AG04449 (cell line): ENCODE measurements at regions of chr16 and their contacts with region 1.

Region 1: GRCh38 chr16:30445408-30446202 is at the start of gene SEPHS2:
- DNase-seq: peak; percentile 87
- H3K4me3 ChIP-seq: peak within 1 kb of the TSS; percentile 85
- CTCF ChIP-seq: peak; percentile 71

Region 2: DNA sequence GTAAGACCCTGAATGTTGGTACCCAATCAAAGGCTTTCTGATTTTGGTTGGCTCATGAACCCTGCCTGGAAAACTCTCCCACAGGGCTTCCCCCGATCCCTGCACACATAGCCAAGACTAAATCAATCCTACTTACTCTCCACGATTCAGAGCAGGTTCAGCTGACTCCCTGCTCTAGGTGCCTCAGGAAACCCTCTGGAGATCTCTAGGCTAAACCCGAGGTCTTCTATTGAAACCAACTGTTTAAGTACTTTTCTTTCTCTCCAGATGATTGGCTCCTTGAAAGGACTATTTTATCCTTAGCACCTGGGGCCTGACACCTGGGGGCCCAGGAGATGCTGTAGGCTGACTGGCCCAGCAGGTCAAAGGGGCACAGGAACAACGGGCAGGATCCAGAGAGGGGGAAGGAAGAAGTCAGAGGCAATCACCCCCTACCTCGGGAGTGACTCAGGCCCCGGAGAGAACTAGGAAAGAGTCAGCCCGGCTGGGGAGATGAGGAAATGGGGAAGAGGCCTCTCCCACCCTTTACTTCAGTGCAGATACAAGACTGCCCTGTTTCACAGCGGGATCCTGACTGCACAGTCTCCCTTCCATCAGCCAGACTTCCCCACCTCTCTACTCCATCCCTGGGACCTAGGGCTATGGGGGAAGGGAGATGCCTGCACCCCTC is 77.3 kb before region 1 on chr16:
- CTCF ChIA-PET with region 1: no interaction called
- POLR2A ChIA-PET with region 1: no interaction called
- DNase-seq: no peak
- H3K4me3 ChIP-seq: peak overlapping the region; percentile 85
- CTCF ChIP-seq: no peak

Region 3: GRCh38 chr16:30429678-30430427 is 15.8 kb before region 1 on chr16 and contains the start of gene DCTPP1:
- CTCF ChIA-PET with region 1: interaction called, 43 read pairs
- POLR2A ChIA-PET with region 1: interaction called, 5 read pairs
- DNase-seq: peak; percentile 91
- H3K4me3 ChIP-seq: peak within 1 kb of the TSS; percentile 94
- CTCF ChIP-seq: peak; percentile 71

Region 4: DNA sequence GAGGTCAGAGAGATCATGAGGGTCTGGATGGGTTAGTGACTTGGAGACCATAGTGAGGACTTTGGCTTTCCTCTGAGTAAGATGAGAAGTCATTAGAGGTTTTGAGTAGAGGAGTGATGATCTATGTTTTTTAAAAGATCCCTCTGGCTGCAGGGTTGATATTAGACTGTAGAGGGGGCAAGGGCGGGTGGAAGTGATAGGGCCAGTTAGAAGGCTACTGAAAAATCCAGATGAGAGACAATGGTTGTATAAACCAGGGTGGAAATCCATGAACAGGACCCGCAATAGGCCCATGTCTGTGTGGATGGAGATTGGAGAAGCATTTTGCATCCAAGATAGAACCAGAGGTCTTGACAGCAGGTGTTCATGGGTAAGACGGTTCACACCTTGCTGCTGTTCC is 36.8 kb after region 1 on chr16:
- CTCF ChIA-PET with region 1: interaction called, 18 read pairs
- POLR2A ChIA-PET with region 1: no interaction called
- DNase-seq: no peak
- H3K4me3 ChIP-seq: no peak overlapping the region
- CTCF ChIP-seq: no peak

Region 5: DNA sequence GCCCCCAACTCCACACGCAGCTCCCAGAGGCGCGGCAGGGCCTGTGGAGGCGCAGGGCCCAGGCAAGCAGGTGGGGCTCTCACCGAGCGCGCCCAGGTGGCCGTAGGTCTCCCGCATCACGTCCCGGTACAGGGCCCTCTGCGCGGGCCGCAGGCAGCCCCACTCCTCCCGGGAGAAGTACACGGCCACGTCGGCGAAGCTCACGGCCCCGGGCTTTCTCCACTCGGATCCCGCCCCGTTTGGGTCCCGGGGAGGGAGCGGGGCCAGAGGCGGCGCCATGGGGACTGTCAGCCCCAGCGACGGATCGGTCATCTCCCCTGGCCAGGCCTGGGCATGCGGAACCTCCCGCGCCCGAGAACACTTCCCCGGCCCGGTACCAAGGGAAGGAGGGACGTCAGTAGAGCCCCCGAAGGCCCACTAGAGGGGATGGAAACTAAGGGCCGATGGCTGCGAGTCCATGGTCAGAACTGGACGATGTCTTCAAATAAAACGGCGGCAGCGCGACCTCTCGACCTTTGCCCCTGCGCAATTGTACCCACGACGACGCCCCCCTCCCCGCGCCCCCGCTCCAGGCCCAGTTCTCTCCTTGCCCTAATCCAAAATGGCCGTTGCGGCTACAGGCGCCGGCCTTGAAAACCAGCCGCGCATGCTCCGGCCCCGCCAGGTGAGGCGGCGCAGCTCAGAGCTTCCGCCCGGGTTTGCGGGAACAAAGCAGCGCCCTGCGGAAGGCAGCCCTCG is 88.9 kb after region 1 on chr16 and contains the start of gene ZNF747:
- CTCF ChIA-PET with region 1: interaction called, 18 read pairs
- POLR2A ChIA-PET with region 1: interaction called, 4 read pairs
- DNase-seq: no peak
- H3K4me3 ChIP-seq: peak within 1 kb of the TSS; percentile 70
- CTCF ChIP-seq: no peak

Region 6: DNA sequence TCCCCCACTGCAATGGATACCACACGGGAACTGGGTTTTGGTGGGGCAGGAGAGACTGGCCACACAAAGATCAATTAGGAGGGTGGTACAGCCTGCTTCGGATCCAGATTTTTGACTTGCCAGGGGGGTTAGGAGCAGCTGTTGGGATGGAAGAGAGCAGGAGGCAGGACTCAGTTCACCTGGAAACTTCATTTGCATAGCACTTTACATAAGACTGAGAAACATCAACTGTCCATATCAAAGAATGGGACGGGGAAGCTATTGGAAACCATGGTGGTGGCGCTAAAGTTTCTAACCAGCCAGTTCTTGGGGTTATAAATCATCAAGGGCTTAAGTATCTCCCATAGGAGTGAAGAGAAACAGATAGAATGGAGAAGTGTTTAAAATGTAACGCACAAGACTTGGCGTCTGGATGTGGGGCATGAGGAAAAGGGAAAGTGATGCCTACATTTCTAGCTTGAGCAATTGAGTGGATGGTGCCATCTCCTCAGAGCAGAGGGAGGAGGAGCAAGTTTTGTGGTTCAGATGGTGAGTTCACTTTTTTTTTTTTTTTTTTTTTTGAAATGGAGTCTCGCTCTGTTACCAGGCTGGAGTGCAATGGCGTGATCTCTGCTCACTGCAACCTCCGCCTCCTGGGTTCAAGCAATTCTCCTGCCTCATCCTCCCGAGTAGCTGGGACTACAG is 246.9 kb after region 1 on chr16:
- CTCF ChIA-PET with region 1: interaction called, 10 read pairs
- POLR2A ChIA-PET with region 1: no interaction called
- DNase-seq: no peak
- H3K4me3 ChIP-seq: no peak overlapping the region
- CTCF ChIP-seq: no peak

Region 7: GRCh38 chr16:31700526-31701388 is 1255.2 kb after region 1 on chr16:
- CTCF ChIA-PET with region 1: no interaction called
- POLR2A ChIA-PET with region 1: no interaction called
- DNase-seq: no peak
- H3K4me3 ChIP-seq: peak overlapping the region; percentile 89
- CTCF ChIP-seq: peak; percentile 21